ENCODE measurements at regions of chr6 and their contacts with region 1.

Region 1: GRCh38 chr6:118198746-118199145 is 291.7 kb downstream of the SLC35F1 start:
- DNase-seq: no peak
- H3K4me3 ChIP-seq: no peak overlapping the region
- H3K27ac ChIP-seq: no peak overlapping the region
- H3K4me1 ChIP-seq: no peaks in the 10 kb centered on the region
- H3K27me3 ChIP-seq: no peaks in the 10 kb centered on the region
- CTCF ChIP-seq: no peak
- POLR2A ChIP-seq: no peak

Region 2: DNA sequence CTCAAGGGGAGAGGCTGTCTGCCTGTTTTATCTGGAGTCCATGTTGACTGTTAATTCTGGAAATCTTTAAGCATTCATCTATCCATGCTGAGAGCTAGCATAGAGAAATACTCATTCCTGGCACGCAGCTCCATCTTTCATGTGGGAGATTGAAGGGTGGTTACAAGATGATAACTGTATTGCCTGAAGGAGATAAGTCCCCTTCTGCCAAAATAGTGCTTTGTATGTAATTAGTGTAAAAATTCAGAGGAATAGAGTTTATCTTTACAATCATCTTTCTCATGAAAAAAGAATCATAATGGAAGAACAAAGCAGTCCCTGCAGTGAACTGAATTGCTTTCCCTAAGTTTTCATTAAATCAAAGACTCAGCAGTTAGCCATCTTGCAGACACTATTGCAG is 35.2 kb before region 1 on chr6:
- intact Hi-C with region 1: no loop called
- DNase-seq: no peak
- H3K4me3 ChIP-seq: no peak overlapping the region
- H3K27ac ChIP-seq: no peak overlapping the region
- H3K4me1 ChIP-seq: no peaks in the 10 kb centered on the region
- H3K27me3 ChIP-seq: no peaks in the 10 kb centered on the region
- CTCF ChIP-seq: no peak
- POLR2A ChIP-seq: no peak

Region 3: GRCh38 chr6:118787724-118788423 is 589.1 kb after region 1 on chr6:
- intact Hi-C with region 1: loop called (anchors 5 kb)
- DNase-seq: no peak
- H3K4me3 ChIP-seq: no peak overlapping the region
- H3K27ac ChIP-seq: no peak overlapping the region
- H3K4me1 ChIP-seq: no peaks in the 10 kb centered on the region
- H3K27me3 ChIP-seq: no peaks in the 10 kb centered on the region
- CTCF ChIP-seq: no peak
- POLR2A ChIP-seq: no peak